Uterus (tissue), 4 donors: ENCODE measurements at regions of chr7 and their contacts with region 1.

Region 1: GRCh38 chr7:129292861-129293260 is 68.0 kb downstream of the AHCYL2 start:
- DNase-seq: no peak
- H3K4me3 ChIP-seq: no peak overlapping the region
- H3K27ac ChIP-seq: no peak overlapping the region
- H3K4me1 ChIP-seq: no peaks in the 10 kb centered on the region
- H3K27me3 ChIP-seq: no peaks in the 10 kb centered on the region
- CTCF ChIP-seq: no peak
- POLR2A ChIP-seq: no peak

Region 2: GRCh38 chr7:129218514-129219062 is 74.3 kb before region 1 on chr7:
- intact Hi-C with region 1: loop called (anchors 5 kb)
- DNase-seq: peak; percentile 78 to 87
- H3K4me3 ChIP-seq: no peak overlapping the region
- H3K27ac ChIP-seq: no peak overlapping the region
- H3K4me1 ChIP-seq: no peaks in the 10 kb centered on the region
- H3K27me3 ChIP-seq: no peaks in the 10 kb centered on the region
- CTCF ChIP-seq: peak; percentile 77 to 90 (median 88)
- POLR2A ChIP-seq: no peak

Region 3: DNA sequence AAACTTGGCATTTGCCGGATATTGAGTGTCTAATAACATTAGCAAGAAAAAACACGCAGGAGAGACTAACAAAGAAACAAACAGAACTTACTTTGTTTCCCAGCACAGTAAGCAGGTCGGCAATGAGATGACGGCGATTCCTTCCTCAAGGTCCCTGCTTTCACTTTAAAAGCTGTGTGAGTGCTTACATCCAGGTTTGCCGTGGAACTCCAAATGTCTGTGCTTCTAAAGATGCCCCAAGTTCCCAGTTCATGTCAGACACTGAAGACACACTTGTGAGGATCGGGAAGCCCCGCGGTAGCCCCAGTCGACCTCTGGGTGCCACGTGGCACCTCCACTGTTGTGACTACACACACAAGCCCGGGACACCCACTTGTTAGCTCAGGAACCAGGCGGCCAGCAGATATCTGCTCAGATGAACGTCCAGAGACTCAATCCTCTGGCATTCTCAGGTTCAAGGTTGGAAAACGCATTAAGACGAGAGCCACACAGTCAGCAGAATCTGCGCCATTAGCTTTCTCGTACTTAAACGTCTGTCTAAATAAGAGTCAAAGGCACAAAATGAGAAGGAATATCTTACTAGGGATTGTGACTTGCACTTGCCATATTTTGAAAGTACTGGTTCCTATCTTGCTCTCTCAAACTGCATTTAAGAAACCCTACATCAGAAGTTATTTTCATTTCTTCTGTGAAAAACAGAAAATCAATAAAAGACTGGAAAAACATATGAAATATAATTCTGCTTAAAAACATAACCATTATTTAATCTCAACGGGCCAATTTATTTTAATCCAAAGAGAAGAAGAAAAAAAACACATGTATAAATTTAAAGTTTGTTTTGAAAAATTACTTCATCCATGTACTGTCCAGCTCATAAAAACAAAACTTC is 1648.7 kb after region 1 on chr7:
- intact Hi-C with region 1: no loop called
- DNase-seq: peak; percentile 51 to 59
- H3K4me3 ChIP-seq: peak overlapping the region; percentile 38 to 52
- H3K27ac ChIP-seq: peak overlapping the region; percentile 87 to 94
- H3K4me1 ChIP-seq: peaks cover 0 to 16% of the 10 kb centered on the region in 2 donors
- H3K27me3 ChIP-seq: no peaks in the 10 kb centered on the region
- CTCF ChIP-seq: no peak
- POLR2A ChIP-seq: peak; percentile 18